Right ventricle myocardium superior (tissue), 1 donor: ENCODE measurements at regions of chr10 and their contacts with region 1.

Region 1: GRCh38 chr10:14536241-14537213 is 205.8 kb upstream of the FRMD4A start:
- DNase-seq: peak; percentile 83
- ATAC-seq: peak; percentile 85

Region 2: DNA sequence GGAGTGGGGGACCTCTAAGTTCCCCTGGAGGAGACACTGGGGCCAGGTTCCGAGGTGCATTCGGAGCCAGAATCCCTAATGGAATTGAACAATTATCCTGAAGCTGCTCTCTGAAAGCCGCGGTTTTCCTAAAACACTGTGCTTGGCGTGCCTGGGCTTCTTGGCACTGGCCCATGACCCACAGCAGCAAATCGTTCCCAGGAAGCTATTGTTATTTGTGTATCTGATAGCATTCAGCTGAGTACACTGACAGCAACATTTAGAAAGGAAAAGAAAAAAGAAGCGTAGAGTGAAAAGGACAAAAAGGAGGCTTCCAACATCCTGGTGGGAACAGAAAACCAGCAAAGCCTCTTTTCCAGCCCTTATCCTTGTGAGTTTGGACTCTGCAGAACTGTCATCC is 545.6 kb before region 1 on chr10:
- intact Hi-C with region 1: no loop called
- DNase-seq: peak; percentile 61
- ATAC-seq: peak; percentile 57

Region 3: DNA sequence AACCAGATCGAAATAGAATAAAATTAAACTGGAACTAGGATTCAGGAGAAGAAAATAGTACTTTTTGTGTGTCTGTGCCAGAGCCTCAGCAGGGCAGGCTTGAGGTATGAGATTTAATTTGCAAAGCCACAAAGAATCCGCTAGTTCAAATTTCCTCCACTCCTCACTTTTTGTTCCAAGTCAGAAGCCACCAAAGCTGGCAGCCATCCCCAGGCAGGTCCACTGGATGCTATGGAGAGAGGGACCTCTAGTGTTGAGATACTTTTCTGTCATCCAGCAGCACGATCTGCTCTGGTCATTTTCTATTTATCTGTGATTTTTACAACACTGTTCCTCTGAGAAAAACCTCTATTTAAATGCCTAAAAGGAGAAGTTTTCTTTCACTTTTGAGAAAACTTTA is 57.9 kb before region 1 on chr10:
- intact Hi-C with region 1: no loop called
- DNase-seq: peak; percentile 79
- ATAC-seq: peak; percentile 80

Region 4: DNA sequence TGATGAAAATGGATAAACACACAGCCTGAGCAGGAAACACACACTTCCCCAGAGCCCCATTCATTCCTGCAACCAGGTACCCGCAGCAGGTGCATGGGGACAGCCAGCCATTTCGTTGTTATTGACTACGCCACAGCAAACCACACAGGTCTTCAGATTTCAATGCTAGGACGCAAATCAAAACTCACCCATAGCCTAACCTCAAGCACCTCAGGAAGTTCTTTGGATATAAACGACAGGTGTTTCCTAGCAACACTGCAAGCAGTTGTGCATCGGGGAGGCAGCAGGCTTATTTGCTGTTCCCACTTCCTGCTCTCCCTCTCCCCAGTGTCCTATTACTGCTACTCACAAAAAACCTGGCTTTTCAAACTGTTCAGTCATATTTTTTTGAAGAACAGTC is 29.4 kb before region 1 on chr10:
- intact Hi-C with region 1: no loop called
- DNase-seq: no peak
- ATAC-seq: no peak

Region 5: GRCh38 chr10:14723052-14723689 is 186.6 kb after region 1 on chr10:
- intact Hi-C with region 1: no loop called
- DNase-seq: no peak
- ATAC-seq: no peak

Region 6: DNA sequence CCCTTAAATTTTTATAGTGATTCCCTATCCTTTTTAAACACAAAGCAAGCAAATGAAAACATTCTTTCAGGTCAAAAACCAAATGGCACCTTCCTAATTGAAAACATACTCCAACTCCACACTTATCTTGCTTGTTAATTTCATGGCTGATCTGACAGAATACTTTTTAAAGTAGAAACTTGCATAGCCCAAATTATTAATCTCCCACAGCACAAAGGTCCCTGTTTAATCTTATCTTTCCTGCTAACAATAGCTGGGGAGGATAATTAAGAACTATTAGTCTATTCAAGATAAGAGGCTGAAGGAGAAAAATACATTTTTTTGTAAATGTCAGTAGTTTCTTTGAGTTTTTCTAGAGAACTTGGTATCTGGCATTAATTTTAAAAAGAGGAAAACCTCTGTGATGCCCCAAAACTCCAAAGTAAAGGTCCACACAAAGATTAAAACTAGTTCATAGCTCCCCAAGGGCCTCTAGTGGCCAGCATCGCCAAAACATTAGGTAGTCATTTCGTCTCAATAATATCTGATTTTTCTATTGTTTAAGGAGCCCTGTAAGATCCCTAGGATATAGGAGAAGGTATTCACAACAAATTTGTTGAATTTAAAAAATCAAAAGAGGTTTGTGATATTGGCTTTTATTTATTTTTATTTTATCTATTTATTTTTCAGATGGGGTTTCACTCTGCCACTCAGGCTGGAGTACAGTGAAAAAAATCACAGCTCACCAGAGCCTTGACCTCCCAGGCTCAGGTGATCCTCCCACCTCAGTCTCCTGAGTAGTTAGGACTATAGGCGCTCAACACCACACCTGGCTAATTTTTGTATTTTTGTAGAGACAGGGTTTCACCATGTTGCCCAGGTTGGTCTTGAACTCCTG is 286.6 kb after region 1 on chr10:
- intact Hi-C with region 1: loop called (anchors 10 kb)
- DNase-seq: no peak
- ATAC-seq: no peak